IMR-90 (cell line): ENCODE measurements at regions of chr19 and their contacts with region 1.

Region 1: GRCh38 chr19:46480415-46480814 is 9.1 kb upstream of the PNMA8A start:
- DNase-seq: peak; percentile 82
- ATAC-seq: peak; percentile 78
- H3K4me3 ChIP-seq: no peak overlapping the region
- H3K27ac ChIP-seq: peak overlapping the region; percentile 96; the same call in 1 of the 2 replicates
- H3K4me1 ChIP-seq: peaks cover 6% of the 10 kb centered on the region
- H3K27me3 ChIP-seq: no peaks in the 10 kb centered on the region
- CTCF ChIP-seq: no peak
- POLR2A ChIP-seq: no peak
- RAD21 ChIP-seq: no peak

Region 2: GRCh38 chr19:45862564-45863334 is 617.7 kb before region 1 on chr19 and contains the start of gene SYMPK:
- CTCF ChIA-PET with region 1: no interaction called
- POLR2A ChIA-PET with region 1: interaction called, 12 read pairs
- dilution Hi-C with region 1: no loop called
- in situ Hi-C with region 1: no loop called
- intact Hi-C with region 1: no loop called
- DNase-seq: peak; percentile 97
- ATAC-seq: peak; percentile 97
- H3K4me3 ChIP-seq: peak within 1 kb of the TSS; percentile 72
- H3K27ac ChIP-seq: peak within 1 kb of the TSS; percentile 88
- H3K4me1 ChIP-seq: no peaks in the 10 kb centered on the region
- H3K27me3 ChIP-seq: peaks cover 38% of the 10 kb centered on the region
- CTCF ChIP-seq: no peak
- POLR2A ChIP-seq: peak; percentile 64
- RAD21 ChIP-seq: no peak
- total RNA-seq, gene SYMPK: 33.6 and 35.3 TPM in 2 replicates

Region 3: DNA sequence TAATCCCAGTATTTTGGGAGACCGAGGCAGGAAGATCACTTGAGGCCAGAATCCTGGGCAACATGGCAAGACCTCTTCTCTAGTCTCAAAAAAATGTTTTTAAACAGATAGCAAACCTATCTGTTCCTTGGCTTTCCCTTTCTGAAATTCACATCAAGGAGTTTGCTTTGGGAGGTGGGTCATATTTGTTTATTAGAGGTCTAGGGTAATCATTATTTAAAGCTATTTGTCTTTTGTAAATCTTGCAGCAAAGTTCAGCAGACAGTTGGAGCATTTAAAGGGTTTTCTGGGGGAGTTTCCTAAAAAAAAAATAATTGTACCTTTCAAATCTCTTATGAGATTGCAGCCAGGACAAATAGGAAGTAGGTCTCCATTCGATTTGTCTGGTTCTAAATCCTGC is 116.1 kb before region 1 on chr19:
- CTCF ChIA-PET with region 1: no interaction called
- POLR2A ChIA-PET with region 1: interaction called, 16 read pairs
- dilution Hi-C with region 1: no loop called
- in situ Hi-C with region 1: no loop called
- intact Hi-C with region 1: no loop called
- DNase-seq: no peak
- ATAC-seq: no peak
- H3K4me3 ChIP-seq: no peak overlapping the region
- H3K27ac ChIP-seq: no peak overlapping the region
- H3K4me1 ChIP-seq: no peaks in the 10 kb centered on the region
- H3K27me3 ChIP-seq: no peaks in the 10 kb centered on the region
- CTCF ChIP-seq: no peak
- POLR2A ChIP-seq: no peak
- RAD21 ChIP-seq: no peak